Left lung (tissue), 14 donors: ENCODE measurements at regions of chr22 and their contacts with region 1.

Region 1: DNA sequence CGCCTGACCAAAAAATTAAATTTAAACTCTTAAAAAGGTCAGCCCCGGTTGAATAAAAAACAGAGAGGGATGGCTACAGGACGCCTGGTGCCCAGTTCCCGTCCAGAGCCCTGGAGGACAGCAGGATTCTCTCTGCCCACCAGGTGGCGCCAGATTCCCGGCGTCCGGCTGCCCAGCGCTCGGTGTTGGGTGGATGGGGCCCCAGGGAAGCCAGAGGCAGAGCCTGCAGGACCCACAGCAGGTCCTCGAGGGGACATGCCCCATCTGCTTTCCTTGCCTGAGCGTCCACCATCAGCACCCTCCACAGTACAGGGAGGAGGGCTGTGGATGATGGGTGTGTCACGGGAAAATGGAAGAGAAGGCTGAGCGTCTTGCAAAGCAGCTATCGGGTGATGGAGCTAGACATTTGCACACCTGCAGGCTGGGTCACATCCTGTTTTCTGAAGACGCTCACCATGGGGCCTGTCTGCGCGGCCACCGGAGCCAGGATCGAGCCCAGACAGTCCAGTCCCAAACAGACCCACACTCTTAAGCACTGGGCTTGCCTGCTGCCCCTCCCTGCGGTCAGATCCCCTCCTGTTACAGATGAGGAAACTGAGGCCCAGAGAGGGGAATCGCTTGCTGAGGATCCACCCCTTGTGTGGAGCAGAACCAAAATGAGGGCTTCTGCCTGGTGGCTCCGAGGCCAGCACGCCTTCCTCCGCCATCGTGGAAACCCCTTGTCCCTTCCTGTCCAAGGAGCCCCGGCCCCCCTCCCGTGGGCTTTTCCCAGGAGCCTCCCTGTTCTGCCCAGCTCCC is 18.5 kb upstream of the CBX7 start:
- DNase-seq: peak; percentile 80 to 97 (median 85)
- ATAC-seq: peak; percentile 88
- H3K4me3 ChIP-seq: no peak overlapping the region
- H3K27ac ChIP-seq: no peak overlapping the region
- H3K4me1 ChIP-seq: peaks cover 31 to 50% of the 10 kb centered on the region in 2 donors
- H3K27me3 ChIP-seq: no peaks in the 10 kb centered on the region
- CTCF ChIP-seq: peak; percentile 97 to 98

Region 2: GRCh38 chr22:39306581-39307361 is 135.7 kb after region 1 on chr22:
- intact Hi-C with region 1: loop called (anchors 5 to 10 kb)
- DNase-seq: no peak
- ATAC-seq: peak; percentile 38
- H3K4me3 ChIP-seq: no peak overlapping the region
- H3K27ac ChIP-seq: no peak overlapping the region
- H3K4me1 ChIP-seq: peaks cover 0 to 30% of the 10 kb centered on the region in 2 donors
- H3K27me3 ChIP-seq: no peaks in the 10 kb centered on the region
- CTCF ChIP-seq: peak; percentile 20 to 32

Region 3: DNA sequence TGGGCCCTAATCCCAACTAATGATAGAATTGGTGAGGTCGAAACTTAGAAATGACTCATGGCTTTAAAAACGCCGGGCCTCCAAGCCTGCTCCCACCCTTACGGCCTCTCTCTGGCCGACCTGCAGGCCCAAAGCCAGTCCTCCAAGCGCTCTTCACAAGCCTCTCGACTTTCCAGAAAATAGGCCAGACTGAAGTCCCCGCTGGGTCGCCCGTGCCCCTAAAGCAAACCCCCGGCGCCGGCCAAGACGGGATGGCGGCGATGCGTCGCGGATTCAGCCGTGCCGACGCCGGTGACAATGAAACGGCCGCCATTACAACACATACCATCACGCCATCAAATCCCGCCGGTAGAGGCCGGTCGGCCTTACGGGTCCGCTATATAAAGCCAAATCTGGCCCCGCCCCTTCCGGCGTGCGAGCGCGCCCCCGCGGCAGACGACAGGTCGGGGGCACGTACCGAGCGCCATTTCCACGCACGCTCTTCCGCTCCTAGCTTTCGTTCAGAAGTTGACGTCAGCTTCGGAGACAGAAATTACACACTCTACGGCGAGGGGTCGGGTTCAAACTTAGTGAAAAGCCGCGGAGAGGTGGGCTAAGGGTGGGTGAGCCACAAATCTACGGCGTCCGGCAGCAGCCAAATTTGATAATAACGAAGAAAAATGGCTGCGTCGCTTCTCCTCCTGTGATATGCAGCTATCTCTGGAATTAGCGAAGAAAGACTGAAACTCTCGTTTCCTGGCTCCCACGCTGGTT is 148.4 kb after region 1 on chr22 and contains the start of gene RPL3:
- intact Hi-C with region 1: loop called (anchors 5 to 10 kb)
- DNase-seq: peak; percentile 96 to 99 (median 98)
- ATAC-seq: peak; percentile 89
- H3K4me3 ChIP-seq: peak within 1 kb of the TSS; percentile 76 to 77
- H3K27ac ChIP-seq: peak within 1 kb of the TSS; percentile 98 to 99
- H3K4me1 ChIP-seq: peaks cover 29 to 51% of the 10 kb centered on the region in 2 donors
- H3K27me3 ChIP-seq: no peaks in the 10 kb centered on the region
- CTCF ChIP-seq: peak in 1 of 2 donors; percentile 23
- polyA plus RNA-seq, gene RPL3: 3,313 to 3,842 (median 3,675) TPM